Naive thymus-derived CD4-positive, alpha-beta T cell (primary cell): ENCODE measurements at regions of chr12 and their contacts with region 1.

Region 1: GRCh38 chr12:56117778-56118687 is at the start of gene ZC3H10:
- DNase-seq: peak; percentile 80 to 99 (median 96)
- ATAC-seq: peak; percentile 89
- H3K4me3 ChIP-seq: peak within 1 kb of the TSS; percentile 95
- H3K4me3 Mint-ChIP-seq: peak within 1 kb of the TSS; percentile 87 to 100 (median 96)
- H3K27ac ChIP-seq: peak within 1 kb of the TSS; percentile 93
- H3K27ac Mint-ChIP-seq: peak within 1 kb of the TSS; percentile 95 to 99 (median 98)
- H3K4me1 ChIP-seq: peaks cover 24 to 25% of the 10 kb centered on the region in 2 donors
- H3K4me1 Mint-ChIP-seq: peaks cover 24 to 47% (median 34%) of the 10 kb centered on the region in 7 donors
- H3K27me3 ChIP-seq: no peaks in the 10 kb centered on the region
- H3K27me3 Mint-ChIP-seq: no peaks in the 10 kb centered on the region
- total RNA-seq, gene ZC3H10: 7.8 to 16.3 (median 13.3) TPM

Region 2: GRCh38 chr12:55829967-55830600 is 287.9 kb before region 1 on chr12:
- CTCF ChIA-PET with region 1: no interaction called
- POLR2A ChIA-PET with region 1: interaction called, 3 read pairs
- intact Hi-C with region 1: loop called in 1 of 2 experiments (anchors 1 kb)
- DNase-seq: peak in 5 of 9 donors; percentile 16 to 44 (median 20)
- ATAC-seq: peak; percentile 2
- H3K4me3 ChIP-seq: peak overlapping the region; percentile 99
- H3K4me3 Mint-ChIP-seq: peak overlapping the region; percentile 88 to 99 (median 99)
- H3K27ac ChIP-seq: peak overlapping the region; percentile 84
- H3K27ac Mint-ChIP-seq: peak overlapping the region; percentile 85 to 98 (median 95)
- H3K4me1 ChIP-seq: peaks cover 37 to 40% of the 10 kb centered on the region in 2 donors
- H3K4me1 Mint-ChIP-seq: peaks cover 42 to 69% (median 53%) of the 10 kb centered on the region in 7 donors
- H3K27me3 ChIP-seq: no peaks in the 10 kb centered on the region
- H3K27me3 Mint-ChIP-seq: no peaks in the 10 kb centered on the region

Region 3: GRCh38 chr12:56071648-56072047 is 46.4 kb before region 1 on chr12:
- CTCF ChIA-PET with region 1: no interaction called
- POLR2A ChIA-PET with region 1: no interaction called
- intact Hi-C with region 1: no loop called
- DNase-seq: no peak
- ATAC-seq: no peak
- H3K4me3 ChIP-seq: no peak overlapping the region
- H3K4me3 Mint-ChIP-seq: no peak overlapping the region
- H3K27ac ChIP-seq: no peak overlapping the region
- H3K27ac Mint-ChIP-seq: peak overlapping the region in 1 of 9 donors; percentile 12
- H3K4me1 ChIP-seq: no peaks in the 10 kb centered on the region
- H3K4me1 Mint-ChIP-seq: peaks cover 0 to 2% (median 0%) of the 10 kb centered on the region in 7 donors
- H3K27me3 ChIP-seq: no peaks in the 10 kb centered on the region
- H3K27me3 Mint-ChIP-seq: peaks cover 0 to 19% (median 0%) of the 10 kb centered on the region in 5 donors

Region 4: GRCh38 chr12:56104109-56104814 is 13.8 kb before region 1 on chr12 and contains the start of gene PA2G4:
- CTCF ChIA-PET with region 1: interaction called, 44 read pairs
- POLR2A ChIA-PET with region 1: interaction called, 230 read pairs
- intact Hi-C with region 1: loop called (anchors 1 kb)
- DNase-seq: peak; percentile 83 to 97 (median 96)
- ATAC-seq: peak; percentile 93
- H3K4me3 ChIP-seq: peak within 1 kb of the TSS; percentile 87
- H3K4me3 Mint-ChIP-seq: peak within 1 kb of the TSS; percentile 91 to 100 (median 98)
- H3K27ac ChIP-seq: peak within 1 kb of the TSS; percentile 82
- H3K27ac Mint-ChIP-seq: peak within 1 kb of the TSS; percentile 92 to 99 (median 98)
- H3K4me1 ChIP-seq: peaks cover 36 to 37% of the 10 kb centered on the region in 2 donors
- H3K4me1 Mint-ChIP-seq: peaks cover 31 to 69% (median 64%) of the 10 kb centered on the region in 7 donors
- H3K27me3 ChIP-seq: no peaks in the 10 kb centered on the region
- H3K27me3 Mint-ChIP-seq: peaks cover 0 to under 1% (median 0%) of the 10 kb centered on the region in 5 donors
- total RNA-seq, gene PA2G4: 61.7 to 254 (median 109) TPM

Region 5: GRCh38 chr12:56224102-56224701 is 106.2 kb after region 1 on chr12 and contains the start of gene NABP2:
- CTCF ChIA-PET with region 1: interaction called, 38 read pairs
- POLR2A ChIA-PET with region 1: interaction called, 61 read pairs
- intact Hi-C with region 1: loop called (anchors 1 kb)
- DNase-seq: peak; percentile 78 to 97 (median 81)
- ATAC-seq: peak; percentile 85
- H3K4me3 ChIP-seq: peak within 1 kb of the TSS; percentile 82
- H3K4me3 Mint-ChIP-seq: peak within 1 kb of the TSS; percentile 77 to 99 (median 87)
- H3K27ac ChIP-seq: peak within 1 kb of the TSS; percentile 98
- H3K27ac Mint-ChIP-seq: peak within 1 kb of the TSS; percentile 78 to 100 (median 91)
- H3K4me1 ChIP-seq: peaks cover 22 to 27% of the 10 kb centered on the region in 2 donors
- H3K4me1 Mint-ChIP-seq: peaks cover 16 to 57% (median 46%) of the 10 kb centered on the region in 7 donors
- H3K27me3 ChIP-seq: no peaks in the 10 kb centered on the region
- H3K27me3 Mint-ChIP-seq: peaks cover 0 to 3% (median 0%) of the 10 kb centered on the region in 5 donors
- total RNA-seq, gene NABP2: 9.2 to 61.2 (median 11.8) TPM

Region 6: DNA sequence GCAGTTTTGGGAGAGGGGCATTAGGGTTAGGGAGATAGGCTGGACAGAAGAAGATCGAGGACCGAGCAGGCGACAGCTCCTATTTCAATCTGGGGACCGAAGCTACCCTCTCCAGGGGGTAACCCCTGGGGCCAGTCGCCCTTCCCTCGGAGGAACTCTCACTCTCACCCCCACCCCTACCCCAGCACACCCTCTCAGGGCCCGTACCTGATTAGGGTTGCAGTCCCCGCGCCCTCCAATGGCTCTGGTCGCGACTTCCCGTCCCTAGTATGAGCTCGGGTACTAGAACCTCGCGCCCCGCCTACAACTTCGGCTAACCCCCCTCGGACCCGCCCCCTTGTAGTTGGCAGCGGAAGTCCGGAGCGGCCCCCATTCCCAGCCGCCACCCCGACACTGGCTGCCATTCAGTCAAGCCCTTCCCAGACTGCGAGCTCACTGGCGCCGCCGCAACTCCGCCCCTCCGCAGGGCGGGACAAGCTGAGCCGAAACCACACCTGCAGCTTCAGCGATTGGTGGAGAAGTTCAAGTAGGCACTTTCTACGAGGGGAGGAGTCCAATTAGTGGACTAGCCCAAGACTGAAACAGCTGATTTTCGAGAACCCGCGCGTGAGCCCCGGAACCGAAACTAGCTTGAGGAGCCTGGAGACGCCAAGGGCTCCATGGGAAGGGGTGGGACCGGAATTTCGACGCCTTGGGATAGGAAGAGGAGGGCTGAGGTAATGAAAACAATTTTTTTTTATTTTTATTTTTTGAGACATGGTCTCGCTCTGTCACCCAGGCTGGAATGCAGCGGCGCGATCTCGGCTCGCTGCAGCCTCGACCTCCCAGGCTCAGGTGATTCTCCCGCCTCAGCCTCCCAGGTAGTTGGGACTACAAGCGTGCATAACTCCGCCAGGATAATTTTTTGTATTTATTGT is 242.1 kb after region 1 on chr12 and contains the start of gene STAT2:
- CTCF ChIA-PET with region 1: no interaction called
- POLR2A ChIA-PET with region 1: interaction called, 8 read pairs
- intact Hi-C with region 1: loop called (anchors 1 to 2 kb)
- DNase-seq: peak; percentile 94 to 100 (median 99)
- ATAC-seq: peak; percentile 97
- H3K4me3 ChIP-seq: peak within 1 kb of the TSS; percentile 89
- H3K4me3 Mint-ChIP-seq: peak within 1 kb of the TSS; percentile 83 to 99 (median 96)
- H3K27ac ChIP-seq: peak within 1 kb of the TSS; percentile 79
- H3K27ac Mint-ChIP-seq: peak within 1 kb of the TSS; percentile 90 to 98 (median 96)
- H3K4me1 ChIP-seq: peaks cover 16 to 17% of the 10 kb centered on the region in 2 donors
- H3K4me1 Mint-ChIP-seq: peaks cover 14 to 40% (median 27%) of the 10 kb centered on the region in 7 donors
- H3K27me3 ChIP-seq: no peaks in the 10 kb centered on the region
- H3K27me3 Mint-ChIP-seq: no peaks in the 10 kb centered on the region
- total RNA-seq, gene STAT2: 119 to 291 (median 182) TPM

Region 7: GRCh38 chr12:57078519-57079404 is 960.7 kb after region 1 on chr12 and contains the start of gene NEMP1:
- CTCF ChIA-PET with region 1: no interaction called
- POLR2A ChIA-PET with region 1: no interaction called
- intact Hi-C with region 1: loop called in 1 of 2 experiments (anchors 2 kb)
- DNase-seq: peak; percentile 65 to 99 (median 98)
- ATAC-seq: peak; percentile 98
- H3K4me3 ChIP-seq: peak within 1 kb of the TSS; percentile 84
- H3K4me3 Mint-ChIP-seq: peak within 1 kb of the TSS; percentile 86 to 99 (median 94)
- H3K27ac ChIP-seq: peak within 1 kb of the TSS; percentile 85
- H3K27ac Mint-ChIP-seq: peak within 1 kb of the TSS; percentile 89 to 99 (median 92)
- H3K4me1 ChIP-seq: peaks cover 6 to 7% of the 10 kb centered on the region in 2 donors
- H3K4me1 Mint-ChIP-seq: peaks cover 0 to 49% (median 25%) of the 10 kb centered on the region in 7 donors
- H3K27me3 ChIP-seq: no peaks in the 10 kb centered on the region
- H3K27me3 Mint-ChIP-seq: no peaks in the 10 kb centered on the region
- total RNA-seq, gene NEMP1: 13.1 to 47.6 (median 29.3) TPM